ENCODE measurements at regions of chr12 and their contacts with region 1.

Region 1: GRCh38 chr12:56751712-56752598 is at the start of gene PRIM1:
- DNase-seq: peak; percentile 84 to 94
- H3K4me3 ChIP-seq: peak within 1 kb of the TSS; percentile 59
- H3K4me1 ChIP-seq: peaks cover 6% of the 10 kb centered on the region
- H3K27me3 ChIP-seq: no peaks in the 10 kb centered on the region

Region 2: DNA sequence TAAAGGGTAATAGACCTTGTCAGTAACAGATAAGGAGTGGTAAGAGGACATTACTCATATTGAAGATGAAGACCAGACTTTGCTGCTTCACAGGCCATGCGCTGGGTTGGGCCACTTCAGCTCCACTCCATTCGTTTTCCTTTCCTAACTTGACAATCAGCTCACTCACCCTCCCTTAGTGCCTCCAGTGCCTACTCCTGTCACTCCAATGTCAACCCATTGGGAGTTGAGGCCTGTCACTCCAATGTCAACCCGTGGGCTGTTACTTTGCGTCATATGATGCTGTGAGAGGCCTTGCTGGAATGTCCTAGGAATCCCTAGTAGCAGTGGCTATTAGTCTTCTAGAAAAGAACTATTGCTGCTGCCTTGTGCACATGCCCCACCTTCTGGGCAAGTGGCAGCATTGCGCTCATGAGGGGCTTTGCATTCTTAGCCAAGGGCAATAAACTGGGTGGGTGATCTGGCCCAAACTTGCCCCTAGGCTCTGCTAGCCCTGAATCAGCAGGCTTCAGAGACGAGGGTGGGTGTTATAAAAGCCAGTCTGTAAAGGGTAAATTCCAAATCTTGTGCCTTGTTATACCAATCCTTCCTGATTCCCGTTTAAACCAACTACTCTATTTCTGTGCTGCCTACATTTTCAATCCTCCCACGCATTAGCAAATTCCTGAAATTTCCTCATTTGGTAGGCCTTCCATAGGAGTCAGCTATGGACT is 157.9 kb before region 1 on chr12:
- in situ Hi-C with region 1: no loop called
- DNase-seq: peak; percentile 62 to 78
- H3K4me3 ChIP-seq: no peak overlapping the region
- H3K4me1 ChIP-seq: no peaks in the 10 kb centered on the region
- H3K27me3 ChIP-seq: no peaks in the 10 kb centered on the region

Region 3: GRCh38 chr12:56987551-56988053 is 235.6 kb after region 1 on chr12:
- in situ Hi-C with region 1: loop called (anchors 5 kb)
- DNase-seq: peak; percentile 76 to 88
- H3K4me3 ChIP-seq: no peak overlapping the region
- H3K4me1 ChIP-seq: peaks cover 5% of the 10 kb centered on the region
- H3K27me3 ChIP-seq: peaks cover 17% of the 10 kb centered on the region; the same call in 1 of the 2 replicates

Measured in HAP-1 (cell line).